ENCODE measurements at regions of chr16 and their contacts with region 1.

Region 1: GRCh38 chr16:85821441-85822135 is 22.1 kb downstream of the COX4I1 start:
- DNase-seq: peak; percentile 83 to 93
- H3K4me3 ChIP-seq: no peak overlapping the region
- H3K27ac ChIP-seq: no peak overlapping the region
- H3K4me1 ChIP-seq: peaks cover 0 to 20% (median 5%) of the 10 kb centered on the region in 4 donors
- H3K27me3 ChIP-seq: peaks cover 0 to 15% (median 0%) of the 10 kb centered on the region in 3 donors
- CTCF ChIP-seq: peak in 6 of 7 experiments; percentile 9 to 98 (median 98)
- EP300 ChIP-seq: no peak
- POLR2A ChIP-seq: no peak

Region 2: GRCh38 chr16:85888405-85889331 is 67.1 kb after region 1 on chr16:
- intact Hi-C with region 1: loop called (anchors 10 kb)
- DNase-seq: no peak
- H3K4me3 ChIP-seq: no peak overlapping the region
- H3K27ac ChIP-seq: no peak overlapping the region
- H3K4me1 ChIP-seq: peaks cover 7 to 24% (median 11%) of the 10 kb centered on the region in 4 donors
- H3K27me3 ChIP-seq: peaks cover 0 to 49% (median 7%) of the 10 kb centered on the region in 3 donors
- CTCF ChIP-seq: no peak
- EP300 ChIP-seq: no peak
- POLR2A ChIP-seq: no peak

Region 3: DNA sequence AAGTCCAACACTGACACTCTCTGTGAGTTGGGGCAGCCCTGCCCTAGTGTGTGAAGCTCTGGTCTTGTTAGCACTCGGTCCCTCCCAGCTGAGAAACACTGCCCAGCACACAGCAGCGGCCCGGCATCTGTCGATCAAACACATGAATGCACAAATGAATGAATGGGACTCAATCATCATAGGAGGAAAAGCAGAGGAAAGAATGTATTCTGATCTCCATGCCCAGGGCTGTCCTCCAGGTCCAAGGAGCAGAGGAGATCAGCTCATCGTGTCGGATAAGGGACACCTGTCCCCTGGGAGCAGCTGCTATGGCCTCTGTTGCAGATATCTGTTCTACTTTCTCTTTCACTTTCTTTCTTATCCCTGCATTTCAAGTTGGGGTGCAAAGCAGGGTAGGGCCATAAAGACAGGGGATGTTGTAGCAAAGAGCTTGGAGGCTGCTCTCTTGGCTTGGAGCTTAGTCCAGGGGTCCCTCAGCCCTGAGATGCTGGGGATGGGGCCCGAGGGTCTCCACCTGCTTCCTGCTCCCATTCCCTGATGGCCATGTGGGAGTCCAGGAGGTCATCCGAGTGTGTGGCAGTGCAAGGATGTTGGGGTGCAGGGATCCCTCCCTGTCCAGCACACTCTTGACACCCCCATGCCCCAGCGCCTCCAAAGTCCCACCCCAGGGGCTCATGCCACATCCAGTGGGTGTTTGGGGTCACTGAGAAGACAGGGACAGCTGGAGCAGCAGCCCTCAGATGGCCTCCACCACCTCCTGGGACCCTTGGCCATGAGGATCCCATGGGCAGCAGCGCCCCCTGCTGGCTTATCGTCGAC is 165.6 kb after region 1 on chr16:
- intact Hi-C with region 1: loop called (anchors 5 kb)
- DNase-seq: peak in 1 of 2 donors; percentile 47
- H3K4me3 ChIP-seq: peak overlapping the region; percentile 1 to 37 (median 24)
- H3K27ac ChIP-seq: no peak overlapping the region
- H3K4me1 ChIP-seq: peaks cover 0 to 10% (median 8%) of the 10 kb centered on the region in 4 donors
- H3K27me3 ChIP-seq: peaks cover 0 to 36% (median 0%) of the 10 kb centered on the region in 3 donors
- CTCF ChIP-seq: peak in 5 of 7 experiments; percentile 5 to 84 (median 42)
- EP300 ChIP-seq: no peak
- POLR2A ChIP-seq: no peak

Region 4: DNA sequence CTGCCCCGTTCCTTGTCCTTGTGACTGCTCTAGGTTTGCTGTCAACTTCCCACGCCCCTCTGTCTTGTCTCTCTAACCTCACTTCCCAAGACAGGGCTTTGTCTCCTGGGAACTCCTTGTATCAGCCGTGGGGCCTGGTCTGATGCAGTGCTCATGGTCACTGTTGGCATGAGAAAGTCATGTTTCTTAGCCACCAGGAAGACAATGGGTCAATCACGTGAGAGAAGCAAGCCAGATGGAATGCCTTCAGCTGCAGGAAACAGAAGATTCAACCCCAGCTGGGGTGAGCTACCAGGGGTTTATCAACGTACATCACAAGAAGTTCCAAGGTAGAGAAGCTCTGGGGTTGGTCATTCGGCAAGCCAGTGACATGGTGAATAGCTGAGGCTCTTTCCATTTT is 194.0 kb after region 1 on chr16:
- intact Hi-C with region 1: loop called (anchors 2 kb)
- DNase-seq: no peak
- H3K4me3 ChIP-seq: no peak overlapping the region
- H3K27ac ChIP-seq: no peak overlapping the region
- H3K4me1 ChIP-seq: no peaks in the 10 kb centered on the region
- H3K27me3 ChIP-seq: peaks cover 0 to 20% (median under 1%) of the 10 kb centered on the region in 3 donors
- CTCF ChIP-seq: no peak
- EP300 ChIP-seq: no peak
- POLR2A ChIP-seq: no peak

Region 5: GRCh38 chr16:86519649-86520316 is 698.2 kb after region 1 on chr16:
- intact Hi-C with region 1: loop called (anchors 10 kb)
- DNase-seq: peak; percentile 59 to 88
- H3K4me3 ChIP-seq: peak overlapping the region in 3 of 4 donors; percentile 6 to 28 (median 26)
- H3K27ac ChIP-seq: peak overlapping the region; percentile 47 to 99 (median 91)
- H3K4me1 ChIP-seq: peaks cover 9 to 37% (median 28%) of the 10 kb centered on the region in 4 donors
- H3K27me3 ChIP-seq: peaks cover 0 to 73% (median 60%) of the 10 kb centered on the region in 3 donors
- CTCF ChIP-seq: peak in 5 of 7 experiments; percentile 60 to 88 (median 70)
- EP300 ChIP-seq: no peak
- POLR2A ChIP-seq: no peak